GM12878 (cell line): ENCODE measurements at regions of chr3 and their contacts with region 1.

Region 1: DNA sequence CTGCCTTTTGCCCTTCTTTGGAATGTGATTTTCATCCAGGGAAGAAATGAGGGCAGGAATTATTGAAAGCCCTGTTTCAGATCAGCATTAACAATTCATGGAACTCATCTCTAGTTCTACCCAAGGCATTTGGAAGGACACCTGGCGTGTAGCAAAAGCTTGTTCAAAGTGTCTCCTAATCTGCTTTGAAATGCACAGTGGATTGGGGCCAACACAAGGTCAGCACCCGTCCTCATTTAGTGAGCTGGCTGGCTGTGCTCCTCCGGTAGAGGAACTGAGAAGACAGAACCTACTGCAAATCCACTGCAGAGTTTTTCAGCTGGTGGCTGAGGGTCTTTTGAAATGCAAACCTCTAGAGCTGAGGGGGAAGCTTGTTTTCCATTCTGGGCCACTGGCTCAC is 141.6 kb upstream of the STT3B start:
- DNase-seq: no peak
- ATAC-seq: peak; percentile 81
- H3K4me3 ChIP-seq: no peak overlapping the region
- H3K27ac ChIP-seq: peak overlapping the region; percentile 35; the same call in 1 of the 2 replicates
- H3K4me1 ChIP-seq: peaks cover 34% of the 10 kb centered on the region
- H3K27me3 ChIP-seq: no peaks in the 10 kb centered on the region
- CTCF ChIP-seq: no peak
- EP300 ChIP-seq: no peak
- POLR2A ChIP-seq: no peak
- RAD21 ChIP-seq: 0 out of 2 replicates have a peak, but pooled peaks have one; percentile 4

Region 2: DNA sequence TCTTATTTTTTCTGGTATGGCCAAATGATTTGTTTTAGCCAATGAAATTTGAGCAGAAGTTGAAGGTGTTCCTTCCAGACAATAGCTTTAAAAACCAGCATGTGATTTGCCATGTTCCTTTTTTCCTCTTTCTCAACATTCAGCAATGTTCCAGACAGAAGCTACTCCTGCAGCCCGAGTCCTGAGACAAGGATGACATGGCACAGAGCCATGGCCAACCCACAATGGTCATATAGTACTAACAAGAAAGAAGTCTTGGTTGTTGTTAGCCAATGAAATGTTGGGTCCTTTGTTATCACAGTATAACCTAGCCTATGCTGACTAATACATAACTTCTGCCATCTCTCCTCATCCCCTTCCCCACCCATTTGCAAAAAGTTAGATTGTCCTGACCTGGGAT is 69.5 kb before region 1 on chr3:
- CTCF ChIA-PET with region 1: no interaction called
- POLR2A ChIA-PET with region 1: no interaction called
- RAD21 ChIA-PET with region 1: no interaction called
- SMC1A ChIA-PET with region 1: no interaction called
- in situ Hi-C with region 1: no loop called
- intact Hi-C with region 1: no loop called
- DNase-seq: no peak
- ATAC-seq: no peak
- H3K4me3 ChIP-seq: no peak overlapping the region
- H3K27ac ChIP-seq: no peak overlapping the region
- H3K4me1 ChIP-seq: no peaks in the 10 kb centered on the region
- H3K27me3 ChIP-seq: no peaks in the 10 kb centered on the region
- CTCF ChIP-seq: no peak
- EP300 ChIP-seq: no peak
- POLR2A ChIP-seq: no peak
- RAD21 ChIP-seq: no peak

Region 3: GRCh38 chr3:31377045-31377642 is 14.0 kb before region 1 on chr3:
- CTCF ChIA-PET with region 1: interaction called, 26 read pairs
- POLR2A ChIA-PET with region 1: interaction called, 5 read pairs
- RAD21 ChIA-PET with region 1: no interaction called
- SMC1A ChIA-PET with region 1: interaction called, 9 read pairs
- in situ Hi-C with region 1: no loop called
- intact Hi-C with region 1: no loop called
- DNase-seq: no peak
- ATAC-seq: peak; percentile 48
- H3K4me3 ChIP-seq: no peak overlapping the region
- H3K27ac ChIP-seq: no peak overlapping the region
- H3K4me1 ChIP-seq: 0 out of 2 replicates have a peak, but pooled peaks cover 3% of the 10 kb centered on the region
- H3K27me3 ChIP-seq: no peaks in the 10 kb centered on the region
- CTCF ChIP-seq: no peak
- EP300 ChIP-seq: no peak
- POLR2A ChIP-seq: no peak
- RAD21 ChIP-seq: no peak

Region 4: GRCh38 chr3:31610700-31611275 is 219.6 kb after region 1 on chr3:
- CTCF ChIA-PET with region 1: no interaction called
- POLR2A ChIA-PET with region 1: no interaction called
- RAD21 ChIA-PET with region 1: no interaction called
- SMC1A ChIA-PET with region 1: no interaction called
- in situ Hi-C with region 1: no loop called
- intact Hi-C with region 1: no loop called
- DNase-seq: no peak
- ATAC-seq: peak; percentile 50; the same call in 2 of the 3 replicates
- H3K4me3 ChIP-seq: no peak overlapping the region
- H3K27ac ChIP-seq: no peak overlapping the region
- H3K4me1 ChIP-seq: no peaks in the 10 kb centered on the region
- H3K27me3 ChIP-seq: no peaks in the 10 kb centered on the region
- CTCF ChIP-seq: peak; percentile 24 to 40 (median 28); a peak in 3 of 6 replicates
- EP300 ChIP-seq: no peak
- POLR2A ChIP-seq: no peak
- RAD21 ChIP-seq: peak; percentile 33; the same call in 1 of the 2 replicates

Region 5: GRCh38 chr3:31709005-31709404 is 317.9 kb after region 1 on chr3:
- CTCF ChIA-PET with region 1: no interaction called
- POLR2A ChIA-PET with region 1: no interaction called
- RAD21 ChIA-PET with region 1: no interaction called
- SMC1A ChIA-PET with region 1: no interaction called
- in situ Hi-C with region 1: no loop called
- intact Hi-C with region 1: no loop called
- DNase-seq: no peak
- ATAC-seq: no peak
- H3K4me3 ChIP-seq: no peak overlapping the region
- H3K27ac ChIP-seq: no peak overlapping the region
- H3K4me1 ChIP-seq: no peaks in the 10 kb centered on the region
- H3K27me3 ChIP-seq: peaks cover 0 to 4% of the 10 kb centered on the region in 2 experiments; a peak in 3 of 4 replicates
- CTCF ChIP-seq: no peak
- EP300 ChIP-seq: no peak
- POLR2A ChIP-seq: no peak
- RAD21 ChIP-seq: no peak